Caco-2 (cell line): ENCODE measurements at regions of chr16 and their contacts with region 1.

Region 1: DNA sequence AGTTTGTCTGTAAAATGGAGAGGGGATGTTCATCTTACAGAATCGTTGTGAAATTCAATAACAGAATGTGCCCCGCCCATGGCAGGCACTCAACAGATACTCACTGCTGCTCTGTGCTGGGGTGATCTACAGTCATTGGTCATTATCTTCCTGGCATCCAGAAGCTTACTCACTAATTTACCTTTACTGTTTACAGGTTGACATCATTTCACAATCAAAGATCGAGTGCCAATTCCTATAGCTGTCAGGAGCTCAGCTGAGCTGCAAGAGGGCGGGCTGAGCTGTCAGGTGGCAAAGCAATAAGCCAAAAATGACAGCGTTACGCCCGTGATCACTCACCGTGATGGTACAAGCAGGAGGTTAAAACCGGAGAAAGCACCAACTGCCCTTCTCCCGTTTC is 51.2 kb downstream of the LITAF start:
- DNase-seq: no peak
- H3K4me3 ChIP-seq: no peak overlapping the region
- H3K4me3 Mint-ChIP-seq: no peak overlapping the region
- H3K27ac Mint-ChIP-seq: no peak overlapping the region
- H3K4me1 ChIP-seq: no peaks in the 10 kb centered on the region
- H3K4me1 Mint-ChIP-seq: no peaks in the 10 kb centered on the region
- H3K27me3 ChIP-seq: no peaks in the 10 kb centered on the region
- H3K27me3 Mint-ChIP-seq: no peaks in the 10 kb centered on the region
- CTCF ChIP-seq: no peak

Region 2: GRCh38 chr16:11396241-11397048 is 139.0 kb before region 1 on chr16:
- CTCF ChIA-PET with region 1: interaction called, 9 read pairs
- POLR2A ChIA-PET with region 1: no interaction called
- intact Hi-C with region 1: loop called (anchors 1 kb)
- DNase-seq: peak; percentile 68 to 83
- H3K4me3 ChIP-seq: no peak overlapping the region
- H3K4me3 Mint-ChIP-seq: no peak overlapping the region
- H3K27ac Mint-ChIP-seq: no peak overlapping the region
- H3K4me1 ChIP-seq: no peaks in the 10 kb centered on the region
- H3K4me1 Mint-ChIP-seq: no peaks in the 10 kb centered on the region
- H3K27me3 ChIP-seq: no peaks in the 10 kb centered on the region
- H3K27me3 Mint-ChIP-seq: no peaks in the 10 kb centered on the region
- CTCF ChIP-seq: peak; percentile 96 to 97

Region 3: DNA sequence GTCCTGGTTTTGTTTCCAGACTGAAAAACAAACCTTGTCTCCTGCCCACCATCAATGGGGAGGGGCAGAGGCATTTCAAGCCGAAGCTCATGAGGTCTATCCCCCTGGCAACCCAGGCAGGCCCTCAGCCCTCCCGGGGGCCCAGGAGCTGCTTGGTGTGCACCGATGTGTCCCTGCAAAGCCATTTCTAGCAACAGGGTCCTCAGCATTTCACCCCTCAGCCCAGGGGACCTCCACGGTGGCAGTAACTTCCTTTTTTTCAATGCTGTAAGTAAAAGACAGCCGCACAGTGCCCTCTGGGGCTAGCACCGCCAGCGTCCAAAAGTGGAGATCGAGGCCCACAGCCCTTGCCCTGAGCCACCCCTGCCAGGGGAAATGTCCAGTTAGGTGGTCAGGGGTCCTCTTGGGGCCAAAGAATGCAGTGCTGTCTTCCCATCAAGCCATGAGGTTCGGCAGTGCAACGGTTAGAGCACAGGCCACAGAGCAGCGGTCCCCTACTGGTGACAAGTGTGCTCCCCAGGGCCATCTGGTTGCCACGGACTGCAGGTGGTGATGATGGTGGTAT is 28.6 kb before region 1 on chr16:
- CTCF ChIA-PET with region 1: no interaction called
- POLR2A ChIA-PET with region 1: no interaction called
- intact Hi-C with region 1: no loop called
- DNase-seq: no peak
- H3K4me3 ChIP-seq: no peak overlapping the region
- H3K4me3 Mint-ChIP-seq: no peak overlapping the region
- H3K27ac Mint-ChIP-seq: no peak overlapping the region
- H3K4me1 ChIP-seq: no peaks in the 10 kb centered on the region
- H3K4me1 Mint-ChIP-seq: no peaks in the 10 kb centered on the region
- H3K27me3 ChIP-seq: no peaks in the 10 kb centered on the region
- H3K27me3 Mint-ChIP-seq: no peaks in the 10 kb centered on the region
- CTCF ChIP-seq: no peak